ENCODE measurements at regions of chr13 and their contacts with region 1.

Region 1: GRCh38 chr13:35210261-35210660 is 266.2 kb downstream of the MAB21L1 start:
- DNase-seq: no peak

Region 2: DNA sequence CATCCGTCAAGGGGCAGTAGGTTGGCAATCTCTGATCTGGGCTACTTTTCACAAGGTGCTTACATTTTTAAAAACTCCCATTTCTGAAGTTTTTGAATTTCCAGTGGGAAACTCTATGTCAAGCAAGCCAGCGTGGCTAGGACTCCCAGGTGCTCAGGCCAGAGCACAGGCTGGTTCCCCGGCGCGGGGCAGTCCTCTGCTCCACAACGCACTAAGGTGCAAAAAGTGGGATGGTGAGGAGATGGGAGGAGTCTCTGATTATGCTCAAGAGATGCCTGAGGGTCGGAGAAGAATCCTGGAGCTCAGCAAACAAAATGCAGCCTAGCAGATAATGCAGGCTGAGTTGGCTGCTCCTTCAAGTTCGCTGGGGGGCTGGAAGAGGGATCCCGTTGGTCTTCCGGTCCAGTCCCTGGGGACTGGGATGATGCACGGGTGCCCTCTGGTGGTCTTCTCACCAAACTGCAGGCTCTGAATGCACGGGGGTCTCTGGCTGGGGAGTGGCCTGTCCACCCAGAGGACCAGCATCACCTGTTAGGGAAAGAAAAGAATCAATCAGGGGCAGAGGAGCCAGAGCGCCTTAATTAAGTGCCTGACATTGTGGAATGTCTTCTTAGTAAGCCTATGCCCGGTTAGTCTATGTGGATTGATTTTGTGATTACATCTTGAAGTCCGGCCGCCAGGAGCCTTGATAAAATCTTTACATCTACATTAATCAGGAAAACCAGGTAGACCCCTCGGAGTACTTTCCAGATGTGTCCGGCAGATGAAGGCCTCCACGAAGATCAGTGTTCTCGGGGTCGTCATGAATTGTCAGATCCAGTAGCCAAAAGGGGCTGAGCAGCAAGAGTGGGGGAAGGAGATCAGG is 510.7 kb after region 1 on chr13:
- intact Hi-C with region 1: loop called (anchors 5 kb)
- DNase-seq: no peak

Measured in cardiac septum (tissue), 1 donor.